ENCODE measurements at regions of chr19 and their contacts with region 1.

Region 1: GRCh38 chr19:16441661-16442162 is 30.1 kb downstream of the EPS15L1 start:
- DNase-seq: peak; percentile 79
- ATAC-seq: peak; percentile 91
- H3K4me3 Mint-ChIP-seq: no peak overlapping the region
- H3K27ac Mint-ChIP-seq: peak overlapping the region; percentile 79; the same call in 1 of the 2 replicates
- H3K4me1 Mint-ChIP-seq: peaks cover 37% of the 10 kb centered on the region
- H3K27me3 Mint-ChIP-seq: no peaks in the 10 kb centered on the region
- CTCF ChIP-seq: peak; percentile 58

Region 2: DNA sequence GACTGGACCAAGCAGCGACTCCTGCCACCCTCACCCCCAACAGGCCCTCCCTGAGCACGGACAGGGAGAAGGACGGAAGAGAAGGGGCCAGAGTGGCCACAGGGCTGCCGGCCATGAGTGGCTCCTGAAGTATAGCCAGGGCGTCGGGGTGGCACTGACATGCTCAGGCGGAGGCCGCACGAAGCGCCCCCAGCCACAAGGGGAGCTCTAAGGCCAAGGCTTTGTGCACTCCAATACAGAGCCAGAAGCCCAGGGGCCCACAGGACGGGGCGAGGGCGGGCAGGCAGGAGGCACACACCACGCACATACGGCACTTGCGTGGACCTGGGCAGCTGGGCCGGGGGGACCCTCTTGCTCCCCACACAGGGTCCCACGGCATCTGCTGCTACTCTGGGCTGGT is 65.1 kb before region 1 on chr19:
- CTCF ChIA-PET with region 1: interaction called, 11 read pairs
- POLR2A ChIA-PET with region 1: no interaction called
- DNase-seq: peak; percentile 76
- ATAC-seq: peak; percentile 97
- H3K4me3 Mint-ChIP-seq: no peak overlapping the region
- H3K27ac Mint-ChIP-seq: no peak overlapping the region
- H3K4me1 Mint-ChIP-seq: no peaks in the 10 kb centered on the region
- H3K27me3 Mint-ChIP-seq: no peaks in the 10 kb centered on the region
- CTCF ChIP-seq: peak; percentile 42; the same call in 1 of the 2 replicates

Region 3: DNA sequence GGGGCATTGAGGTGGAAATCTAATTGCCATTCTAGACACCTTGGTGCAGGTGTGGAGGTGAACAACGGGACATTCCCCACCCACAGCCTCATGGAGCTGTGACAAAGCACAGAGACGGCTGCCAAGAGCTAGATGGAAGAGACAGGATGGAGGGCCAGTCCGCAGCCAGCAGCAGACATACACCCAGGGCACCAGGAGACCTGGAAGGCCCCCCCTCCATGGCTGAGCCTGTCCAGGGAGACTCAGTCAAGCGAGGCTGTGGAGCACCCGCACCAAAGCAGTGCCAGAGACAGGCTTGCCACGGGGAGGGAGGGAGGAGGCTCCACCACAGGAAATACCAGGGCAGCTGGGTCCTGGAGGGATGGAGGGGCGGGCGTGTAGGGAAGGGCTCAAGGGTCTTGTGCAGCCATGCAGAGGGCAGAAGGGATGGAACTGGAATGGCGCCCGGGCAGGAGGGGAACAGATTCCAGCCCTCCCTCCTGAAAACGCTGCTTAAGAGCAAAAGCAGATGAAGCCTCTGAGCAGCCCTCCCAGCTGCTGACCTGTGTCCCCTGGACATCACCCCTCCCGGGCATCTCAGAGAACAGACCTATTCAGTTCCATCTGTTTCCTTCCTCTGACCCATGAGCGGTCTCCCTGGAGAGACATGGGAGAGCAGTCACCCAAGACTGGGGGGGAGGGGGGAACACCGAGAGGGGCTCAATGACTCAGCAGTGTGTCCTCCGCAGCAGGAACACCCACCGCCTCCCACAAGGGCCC is 15.7 kb after region 1 on chr19:
- CTCF ChIA-PET with region 1: interaction called, 24 read pairs
- POLR2A ChIA-PET with region 1: no interaction called
- DNase-seq: peak; percentile 32
- ATAC-seq: peak; percentile 42
- H3K4me3 Mint-ChIP-seq: peak overlapping the region; percentile 48
- H3K27ac Mint-ChIP-seq: peak overlapping the region; percentile 95
- H3K4me1 Mint-ChIP-seq: peaks cover 52% of the 10 kb centered on the region
- H3K27me3 Mint-ChIP-seq: no peaks in the 10 kb centered on the region
- CTCF ChIP-seq: no peak

Region 4: DNA sequence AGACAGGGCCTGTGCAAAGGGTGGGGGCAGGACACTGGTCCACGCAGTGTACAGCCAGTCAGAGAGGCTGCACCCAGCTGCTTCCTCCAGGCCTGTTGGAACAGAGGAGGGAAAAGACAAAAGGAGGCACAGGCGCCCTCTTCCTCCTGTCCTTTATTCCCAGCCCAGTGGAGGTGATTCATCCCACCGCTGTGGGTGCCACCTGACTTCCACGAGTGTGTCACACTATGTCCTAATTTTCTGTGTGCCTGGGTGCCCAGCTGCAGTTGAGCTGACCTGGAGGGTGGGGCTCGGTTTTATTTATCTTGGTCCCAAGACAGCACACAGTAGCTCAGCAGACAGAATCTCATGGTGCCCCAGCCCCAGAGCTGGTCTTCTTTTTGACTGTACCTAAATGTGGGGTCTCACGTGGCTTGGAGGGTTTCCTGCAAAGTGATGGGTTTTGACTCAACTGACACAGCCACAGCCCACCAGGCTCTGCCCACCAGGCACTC is 21.1 kb after region 1 on chr19:
- CTCF ChIA-PET with region 1: interaction called, 21 read pairs
- POLR2A ChIA-PET with region 1: no interaction called
- DNase-seq: no peak
- ATAC-seq: no peak
- H3K4me3 Mint-ChIP-seq: no peak overlapping the region
- H3K27ac Mint-ChIP-seq: peak overlapping the region; percentile 81; the same call in 1 of the 2 replicates
- H3K4me1 Mint-ChIP-seq: peaks cover 25% of the 10 kb centered on the region
- H3K27me3 Mint-ChIP-seq: no peaks in the 10 kb centered on the region
- CTCF ChIP-seq: no peak

Region 5: GRCh38 chr19:16495982-16496612 is 54.4 kb after region 1 on chr19 and contains the starts of genes C19orf44 and CALR3:
- CTCF ChIA-PET with region 1: interaction called, 20 read pairs
- POLR2A ChIA-PET with region 1: no interaction called
- DNase-seq: peak; percentile 98
- ATAC-seq: peak; percentile 98
- H3K4me3 Mint-ChIP-seq: peak within 1 kb of the TSS; percentile 91
- H3K27ac Mint-ChIP-seq: peak within 1 kb of the TSS; percentile 63; the same call in 1 of the 2 replicates
- H3K4me1 Mint-ChIP-seq: peaks cover 11% of the 10 kb centered on the region
- H3K27me3 Mint-ChIP-seq: no peaks in the 10 kb centered on the region
- CTCF ChIP-seq: no peak
- total RNA-seq, gene C19orf44: 3.4 to 4.8 TPM (median 4.1 TPM) in 3 replicates
- total RNA-seq, gene CALR3: 0.21 to 0.87 TPM (median 0.50 TPM) in 3 replicates

Region 6: GRCh38 chr19:16516923-16517610 is 75.4 kb after region 1 on chr19:
- CTCF ChIA-PET with region 1: interaction called, 43 read pairs
- POLR2A ChIA-PET with region 1: no interaction called
- DNase-seq: no peak
- ATAC-seq: no peak
- H3K4me3 Mint-ChIP-seq: no peak overlapping the region
- H3K27ac Mint-ChIP-seq: peak overlapping the region; percentile 53; the same call in 1 of the 2 replicates
- H3K4me1 Mint-ChIP-seq: no peaks in the 10 kb centered on the region
- H3K27me3 Mint-ChIP-seq: no peaks in the 10 kb centered on the region
- CTCF ChIP-seq: no peak